H1 (cell line): ENCODE measurements at regions of chr9 and their contacts with region 1.

Region 1: GRCh38 chr9:14768405-14769229 is 46.1 kb upstream of the CER1 start:
- DNase-seq: no peak
- H3K4me3 ChIP-seq: no peak overlapping the region
- H3K27ac ChIP-seq: no peak overlapping the region
- H3K4me1 ChIP-seq: no peaks in the 10 kb centered on the region
- H3K27me3 ChIP-seq: no peaks in the 10 kb centered on the region
- CTCF ChIP-seq: peak in 2 of 3 experiments; percentile 61; a peak in 2 of 4 replicates
- EP300 ChIP-seq: no peak
- POLR2A ChIP-seq: no peak
- RAD21 ChIP-seq: peak; percentile 85 to 86

Region 2: GRCh38 chr9:14441976-14442651 is 326.5 kb before region 1 on chr9:
- CTCF ChIA-PET with region 1: interaction called, 63 read pairs
- POLR2A ChIA-PET with region 1: no interaction called
- DNase-seq: no peak
- H3K4me3 ChIP-seq: no peak overlapping the region
- H3K27ac ChIP-seq: no peak overlapping the region
- H3K4me1 ChIP-seq: peaks cover 0 to 3% (median 1%) of the 10 kb centered on the region in 4 experiments; a peak in 2 of 7 replicates
- H3K27me3 ChIP-seq: no peaks in the 10 kb centered on the region
- CTCF ChIP-seq: peak; percentile 60 to 77 (median 73)
- EP300 ChIP-seq: no peak
- POLR2A ChIP-seq: no peak
- RAD21 ChIP-seq: peak; percentile 71 to 79

Region 3: DNA sequence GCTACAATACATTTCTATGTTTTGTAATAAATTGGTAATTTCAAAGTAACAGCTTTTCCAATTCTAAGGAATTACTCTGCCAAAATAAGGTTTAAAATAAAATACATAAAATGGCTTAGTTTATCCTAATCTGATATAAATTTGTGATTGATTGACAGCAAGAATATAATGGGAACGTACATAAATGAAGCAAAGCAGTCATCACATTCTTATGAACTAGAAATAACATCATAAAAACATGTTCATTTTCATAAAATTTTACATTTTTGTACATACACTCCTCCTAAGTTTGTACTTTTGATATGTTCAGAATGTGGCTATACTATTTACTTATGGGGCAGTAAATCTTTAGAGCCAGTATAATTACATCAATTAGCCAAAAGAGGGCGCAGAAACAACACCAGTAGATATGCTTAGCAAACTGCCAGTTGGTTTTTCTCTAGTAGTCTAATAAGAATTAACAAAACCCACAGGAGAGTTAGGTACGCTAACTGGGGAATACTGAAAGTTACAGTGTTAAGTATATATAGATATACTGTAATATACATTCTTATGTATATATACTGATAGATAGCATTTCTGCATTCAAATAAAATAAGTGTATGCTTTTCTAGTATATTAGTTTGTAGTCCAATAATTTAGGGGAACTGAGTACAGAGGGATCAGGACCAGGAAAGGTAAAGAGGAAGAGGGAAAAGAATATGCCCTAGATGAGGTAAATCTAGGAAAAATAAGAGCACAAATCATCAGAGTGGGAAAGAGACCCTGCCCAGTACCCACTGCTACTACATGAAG is 152.2 kb before region 1 on chr9:
- CTCF ChIA-PET with region 1: interaction called, 11 read pairs
- POLR2A ChIA-PET with region 1: no interaction called
- DNase-seq: no peak
- H3K4me3 ChIP-seq: no peak overlapping the region
- H3K27ac ChIP-seq: no peak overlapping the region
- H3K4me1 ChIP-seq: no peaks in the 10 kb centered on the region
- H3K27me3 ChIP-seq: no peaks in the 10 kb centered on the region
- CTCF ChIP-seq: peak in 2 of 3 experiments; percentile 48 to 52; a peak in 2 of 4 replicates
- EP300 ChIP-seq: no peak
- POLR2A ChIP-seq: no peak
- RAD21 ChIP-seq: peak; percentile 73 to 76

Region 4: GRCh38 chr9:14752271-14752670 is 16.3 kb before region 1 on chr9:
- CTCF ChIA-PET with region 1: interaction called, 17 read pairs
- POLR2A ChIA-PET with region 1: no interaction called
- DNase-seq: no peak
- H3K4me3 ChIP-seq: no peak overlapping the region
- H3K27ac ChIP-seq: no peak overlapping the region
- H3K4me1 ChIP-seq: peaks cover 2 to 7% (median 3%) of the 10 kb centered on the region in 4 experiments; a peak in 3 of 7 replicates
- H3K27me3 ChIP-seq: no peaks in the 10 kb centered on the region
- CTCF ChIP-seq: no peak
- EP300 ChIP-seq: no peak
- POLR2A ChIP-seq: no peak
- RAD21 ChIP-seq: no peak

Region 5: GRCh38 chr9:14782286-14783051 is 13.9 kb after region 1 on chr9:
- CTCF ChIA-PET with region 1: interaction called, 12 read pairs
- POLR2A ChIA-PET with region 1: no interaction called
- DNase-seq: no peak
- H3K4me3 ChIP-seq: no peak overlapping the region
- H3K27ac ChIP-seq: no peak overlapping the region
- H3K4me1 ChIP-seq: peaks cover 0 to 4% (median 0%) of the 10 kb centered on the region in 4 experiments; a peak in 1 of 7 replicates
- H3K27me3 ChIP-seq: no peaks in the 10 kb centered on the region
- CTCF ChIP-seq: no peak
- EP300 ChIP-seq: no peak
- POLR2A ChIP-seq: no peak
- RAD21 ChIP-seq: no peak

Region 6: GRCh38 chr9:14824481-14824880 is 55.9 kb after region 1 on chr9:
- CTCF ChIA-PET with region 1: no interaction called
- POLR2A ChIA-PET with region 1: no interaction called
- DNase-seq: no peak
- H3K4me3 ChIP-seq: no peak overlapping the region
- H3K27ac ChIP-seq: no peak overlapping the region
- H3K4me1 ChIP-seq: no peaks in the 10 kb centered on the region
- H3K27me3 ChIP-seq: no peaks in the 10 kb centered on the region
- CTCF ChIP-seq: no peak
- EP300 ChIP-seq: no peak
- POLR2A ChIP-seq: no peak
- RAD21 ChIP-seq: no peak

Region 7: GRCh38 chr9:15088204-15088603 is 319.6 kb after region 1 on chr9:
- CTCF ChIA-PET with region 1: no interaction called
- POLR2A ChIA-PET with region 1: no interaction called
- DNase-seq: no peak
- H3K4me3 ChIP-seq: no peak overlapping the region
- H3K27ac ChIP-seq: no peak overlapping the region
- H3K4me1 ChIP-seq: no peaks in the 10 kb centered on the region
- H3K27me3 ChIP-seq: no peaks in the 10 kb centered on the region
- CTCF ChIP-seq: no peak
- EP300 ChIP-seq: no peak
- POLR2A ChIP-seq: no peak
- RAD21 ChIP-seq: no peak